ENCODE measurements at regions of chr22 and their contacts with region 1.

Region 1: GRCh38 chr22:17084554-17085276 is at the start of gene IL17RA:
- DNase-seq: peak; percentile 96
- ATAC-seq: peak; percentile 98
- H3K4me3 Mint-ChIP-seq: peak within 1 kb of the TSS; percentile 80
- H3K27ac Mint-ChIP-seq: peak within 1 kb of the TSS; percentile 84
- H3K4me1 Mint-ChIP-seq: peaks cover 49% of the 10 kb centered on the region
- H3K27me3 Mint-ChIP-seq: peaks cover 16% of the 10 kb centered on the region
- total RNA-seq, gene IL17RA: 22.5 to 25.1 TPM

Region 2: DNA sequence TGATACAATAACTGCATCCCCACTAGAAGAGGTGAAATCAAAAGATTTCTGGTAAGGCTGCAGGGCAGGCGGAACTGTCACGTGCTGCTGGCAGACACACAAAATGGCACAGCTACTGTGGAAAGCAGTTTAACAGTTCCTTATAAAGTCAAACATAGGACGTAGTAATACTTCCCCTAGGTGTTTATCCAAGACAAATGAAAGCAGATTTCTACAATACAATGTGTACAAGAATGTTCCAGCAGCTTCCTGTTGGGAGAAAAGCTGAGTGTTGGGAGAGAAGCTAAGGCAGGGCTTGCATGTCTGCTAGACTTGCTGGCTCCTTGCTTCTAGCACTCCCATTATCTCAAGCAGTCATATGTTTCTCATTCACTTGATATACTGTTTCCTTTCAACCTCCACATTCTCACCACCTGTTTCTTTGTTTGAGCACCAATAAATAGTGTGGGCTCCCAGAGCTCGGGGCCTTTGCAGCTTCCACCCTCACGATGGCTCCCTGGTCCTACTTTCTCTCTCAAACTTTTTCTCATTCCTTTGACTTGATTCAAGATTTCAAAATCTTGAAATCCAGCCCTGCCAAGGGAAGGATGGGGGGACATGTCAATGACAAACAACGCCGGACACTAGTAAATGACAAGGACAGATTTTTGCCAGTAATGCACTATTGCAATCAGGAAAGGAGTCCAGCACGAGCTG is 21.2 kb before region 1 on chr22:
- CTCF ChIA-PET with region 1: no interaction called
- DNase-seq: no peak
- ATAC-seq: no peak
- H3K4me3 Mint-ChIP-seq: no peak overlapping the region
- H3K27ac Mint-ChIP-seq: no peak overlapping the region
- H3K4me1 Mint-ChIP-seq: no peaks in the 10 kb centered on the region
- H3K27me3 Mint-ChIP-seq: peaks cover 12% of the 10 kb centered on the region

Region 3: GRCh38 chr22:17095538-17095937 is 10.8 kb after region 1 on chr22:
- CTCF ChIA-PET with region 1: interaction called, 11 read pairs
- DNase-seq: no peak
- ATAC-seq: no peak
- H3K4me3 Mint-ChIP-seq: no peak overlapping the region
- H3K27ac Mint-ChIP-seq: no peak overlapping the region
- H3K4me1 Mint-ChIP-seq: peaks cover 49% of the 10 kb centered on the region
- H3K27me3 Mint-ChIP-seq: peaks cover 2% of the 10 kb centered on the region

Measured in activated CD8-positive, alpha-beta memory T cell treated with anti-CD3 and anti-CD28 coated beads, Interleukin-2, amount 10 ng/mL, durations not matched to agents 7 days and 5 days (primary cell).